Natural killer cell (primary cell): ENCODE measurements at regions of chr20 and their contacts with region 1.

Region 1: DNA sequence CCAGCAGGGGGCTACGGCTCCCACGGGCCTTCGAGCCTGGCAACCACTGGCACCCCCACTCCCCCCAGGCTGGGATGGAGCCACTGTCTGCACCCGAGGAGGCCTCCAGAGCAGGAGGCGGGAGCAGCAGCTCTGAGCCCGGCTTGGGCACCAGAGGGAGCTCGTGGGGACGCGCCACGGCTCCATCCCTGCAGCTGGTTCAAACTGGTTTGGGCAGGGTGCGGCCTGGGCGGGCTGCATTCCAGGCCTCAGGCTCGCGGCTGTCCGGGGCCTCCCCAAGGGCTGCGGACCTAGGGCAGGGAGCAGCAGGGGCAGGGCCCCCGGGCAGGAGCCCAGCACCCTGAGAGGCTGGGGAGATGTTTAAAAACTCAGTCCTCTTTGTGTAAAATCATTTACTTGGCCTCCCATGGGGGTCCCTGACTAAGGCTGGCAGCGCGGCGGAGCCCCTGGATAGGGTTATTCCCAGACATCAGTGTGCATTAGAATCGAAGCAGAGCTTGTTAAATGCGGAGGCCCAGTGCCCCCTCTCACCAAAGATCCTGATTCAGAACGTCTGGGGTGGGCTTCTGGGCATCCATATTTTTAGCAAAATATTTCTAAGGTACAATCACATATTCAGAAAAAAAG is 4.1 kb upstream of the BCAS4 start:
- DNase-seq: peak; percentile 67 to 88
- ATAC-seq: peak; percentile 54 to 58 (median 56)
- H3K4me3 ChIP-seq: peak overlapping the region; percentile 23
- H3K4me3 Mint-ChIP-seq: peak overlapping the region; percentile 42
- H3K27ac ChIP-seq: peak overlapping the region; percentile 81
- H3K27ac Mint-ChIP-seq: peak overlapping the region in 1 of 2 donors; percentile 69
- H3K4me1 ChIP-seq: peaks cover 25% of the 10 kb centered on the region
- H3K4me1 Mint-ChIP-seq: peaks cover 5 to 13% of the 10 kb centered on the region in 2 donors
- H3K27me3 ChIP-seq: no peaks in the 10 kb centered on the region
- H3K27me3 Mint-ChIP-seq: peaks cover 0 to 5% of the 10 kb centered on the region in 2 donors
- CTCF ChIP-seq: peak; percentile 59

Region 2: GRCh38 chr20:50913690-50914375 is 123.1 kb after region 1 on chr20:
- intact Hi-C with region 1: no loop called
- DNase-seq: no peak
- ATAC-seq: peak; percentile 24 to 73 (median 45)
- H3K4me3 ChIP-seq: no peak overlapping the region
- H3K4me3 Mint-ChIP-seq: no peak overlapping the region
- H3K27ac ChIP-seq: no peak overlapping the region
- H3K27ac Mint-ChIP-seq: peak overlapping the region; percentile 81 to 84
- H3K4me1 ChIP-seq: peaks cover 9% of the 10 kb centered on the region
- H3K4me1 Mint-ChIP-seq: peaks cover 83 to 85% of the 10 kb centered on the region in 2 donors
- H3K27me3 ChIP-seq: no peaks in the 10 kb centered on the region
- H3K27me3 Mint-ChIP-seq: no peaks in the 10 kb centered on the region
- CTCF ChIP-seq: no peak

Region 3: GRCh38 chr20:50929299-50930138 is 138.8 kb after region 1 on chr20:
- intact Hi-C with region 1: loop called (anchors 1 kb)
- DNase-seq: peak; percentile 83 to 97
- ATAC-seq: peak; percentile 62 to 86 (median 66)
- H3K4me3 ChIP-seq: peak overlapping the region; percentile 70
- H3K4me3 Mint-ChIP-seq: peak overlapping the region; percentile 95
- H3K27ac ChIP-seq: peak overlapping the region; percentile 34
- H3K27ac Mint-ChIP-seq: peak overlapping the region; percentile 90 to 98
- H3K4me1 ChIP-seq: peaks cover 24% of the 10 kb centered on the region
- H3K4me1 Mint-ChIP-seq: peaks cover 45% of the 10 kb centered on the region in 2 donors
- H3K27me3 ChIP-seq: no peaks in the 10 kb centered on the region
- H3K27me3 Mint-ChIP-seq: no peaks in the 10 kb centered on the region
- CTCF ChIP-seq: peak; percentile 91